Esophagus muscularis mucosa (tissue), 4 donors: ENCODE measurements at regions of chr15 and their contacts with region 1.

Region 1: GRCh38 chr15:65610871-65611718 is at the start of gene INTS14:
- DNase-seq: peak; percentile 98
- H3K4me3 ChIP-seq: peak within 1 kb of the TSS; percentile 77 to 96 (median 90)
- H3K27ac ChIP-seq: peak within 1 kb of the TSS; percentile 89 to 97 (median 94)
- H3K4me1 ChIP-seq: peaks cover 14 to 41% (median 34%) of the 10 kb centered on the region in 4 donors
- H3K27me3 ChIP-seq: no peaks in the 10 kb centered on the region
- CTCF ChIP-seq: peak; percentile 61 to 73 (median 64)
- EP300 ChIP-seq: no peak
- POLR2A ChIP-seq: peak; percentile 71
- total RNA-seq, gene INTS14: 18.9 to 24.2 (median 21.3) TPM

Region 2: DNA sequence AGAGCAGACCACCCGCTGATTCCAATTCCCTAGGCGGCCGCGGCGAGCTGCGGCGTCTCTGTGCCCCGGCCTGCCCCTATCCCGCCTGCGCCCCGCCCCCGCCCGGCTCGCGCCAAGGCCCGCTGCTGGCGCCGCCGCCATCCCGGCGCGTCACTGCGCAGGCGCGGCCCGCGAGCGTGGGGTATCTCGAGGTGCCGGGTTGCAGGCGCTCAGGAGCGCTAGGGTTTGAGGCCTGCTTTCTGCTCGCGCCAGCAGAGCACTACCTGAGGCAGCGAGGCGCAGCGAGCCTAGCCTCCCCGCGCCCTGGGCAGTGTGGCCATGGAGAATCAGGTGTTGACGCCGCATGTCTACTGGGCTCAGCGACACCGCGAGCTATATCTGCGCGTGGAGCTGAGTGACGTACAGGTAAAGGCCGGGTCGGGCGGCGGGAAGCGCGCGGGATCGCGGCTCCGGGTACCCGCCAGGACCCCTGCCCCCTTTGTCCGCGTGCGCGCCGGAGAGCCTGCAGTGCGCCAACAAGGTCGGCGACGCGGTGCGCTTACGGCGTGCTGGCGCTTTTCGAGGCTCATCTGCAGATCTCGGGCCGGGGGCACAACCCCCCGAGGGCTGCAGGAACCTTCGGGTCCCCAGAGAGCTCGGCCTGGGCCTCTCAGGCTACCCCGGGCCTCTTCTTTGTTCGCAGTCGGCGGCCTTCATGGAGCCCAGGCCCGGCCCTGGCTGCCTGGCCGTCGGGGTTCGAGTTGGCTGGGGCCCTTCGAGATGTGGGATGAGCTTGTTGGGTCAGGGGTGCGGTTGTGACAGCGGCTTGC is 80.6 kb before region 1 on chr15 and contains the start of gene HACD3:
- intact Hi-C with region 1: loop called (anchors 5 kb)
- DNase-seq: peak; percentile 93
- H3K4me3 ChIP-seq: peak within 1 kb of the TSS; percentile 71 to 95 (median 90)
- H3K27ac ChIP-seq: peak within 1 kb of the TSS; percentile 70 to 83 (median 82)
- H3K4me1 ChIP-seq: peaks cover 3 to 31% (median 26%) of the 10 kb centered on the region in 4 donors
- H3K27me3 ChIP-seq: no peaks in the 10 kb centered on the region
- CTCF ChIP-seq: peak in 2 of 3 experiments; percentile 7 to 32
- EP300 ChIP-seq: no peak
- POLR2A ChIP-seq: no peak
- total RNA-seq, gene HACD3: 19.1 to 29.6 (median 24.8) TPM